A549 (cell line): ENCODE measurements at regions of chr16 and their contacts with region 1.

Region 1: DNA sequence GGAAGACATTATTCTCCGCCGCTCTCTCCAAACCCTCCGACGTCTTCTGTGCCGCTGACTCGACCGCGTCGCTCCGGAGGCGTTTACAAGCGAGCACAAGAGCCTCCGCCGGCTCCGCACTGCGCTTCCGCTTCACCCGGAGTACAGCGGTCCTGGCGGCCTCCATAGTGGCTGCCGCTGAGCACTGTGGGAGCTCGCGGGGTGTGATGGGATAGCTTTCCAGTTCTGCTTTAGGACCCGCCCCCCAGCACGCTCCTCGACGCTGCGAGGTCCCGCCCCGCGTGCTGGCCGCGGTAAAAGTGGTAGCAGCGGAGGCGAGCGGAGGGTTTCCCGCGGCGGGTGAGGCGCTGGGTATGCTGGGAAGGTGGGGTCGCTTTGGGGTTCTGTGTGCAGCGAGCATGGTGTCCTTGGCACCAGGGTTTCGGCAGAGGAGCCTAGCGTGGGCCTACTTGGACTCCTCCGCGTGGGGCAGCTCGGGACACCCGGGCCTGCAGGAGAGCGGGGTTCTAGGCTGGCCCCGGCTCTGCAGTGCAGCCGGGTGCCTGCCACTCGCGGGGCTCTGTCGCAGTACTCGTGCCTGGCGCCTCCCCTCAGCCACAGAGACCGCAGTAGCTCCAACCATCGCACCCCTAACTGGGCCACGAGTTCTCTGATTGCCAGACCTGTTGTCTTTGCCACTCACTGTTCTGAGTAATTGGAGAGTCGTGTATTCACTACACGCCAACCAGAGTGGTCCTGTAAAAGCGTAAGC is at the starts of genes PRMT7 and SLC7A6OS:
- DNase-seq: peak; percentile 89 to 98
- ATAC-seq: peak; percentile 99 to 100
- H3K4me3 ChIP-seq: peak within 1 kb of the TSS; percentile 91
- H3K27ac ChIP-seq: peak within 1 kb of the TSS; percentile 83 to 90
- H3K4me1 ChIP-seq: peaks cover 21% of the 10 kb centered on the region
- CTCF ChIP-seq: no peak
- EP300 ChIP-seq: no peak
- POLR2A ChIP-seq: peak; percentile 91
- RAD21 ChIP-seq: no peak
- polyA plus RNA-seq, gene PRMT7: 37.1 and 37.6 TPM in 2 replicates
- polyA plus RNA-seq, gene SLC7A6OS: 11.0 and 11.9 TPM in 2 replicates

Region 2: DNA sequence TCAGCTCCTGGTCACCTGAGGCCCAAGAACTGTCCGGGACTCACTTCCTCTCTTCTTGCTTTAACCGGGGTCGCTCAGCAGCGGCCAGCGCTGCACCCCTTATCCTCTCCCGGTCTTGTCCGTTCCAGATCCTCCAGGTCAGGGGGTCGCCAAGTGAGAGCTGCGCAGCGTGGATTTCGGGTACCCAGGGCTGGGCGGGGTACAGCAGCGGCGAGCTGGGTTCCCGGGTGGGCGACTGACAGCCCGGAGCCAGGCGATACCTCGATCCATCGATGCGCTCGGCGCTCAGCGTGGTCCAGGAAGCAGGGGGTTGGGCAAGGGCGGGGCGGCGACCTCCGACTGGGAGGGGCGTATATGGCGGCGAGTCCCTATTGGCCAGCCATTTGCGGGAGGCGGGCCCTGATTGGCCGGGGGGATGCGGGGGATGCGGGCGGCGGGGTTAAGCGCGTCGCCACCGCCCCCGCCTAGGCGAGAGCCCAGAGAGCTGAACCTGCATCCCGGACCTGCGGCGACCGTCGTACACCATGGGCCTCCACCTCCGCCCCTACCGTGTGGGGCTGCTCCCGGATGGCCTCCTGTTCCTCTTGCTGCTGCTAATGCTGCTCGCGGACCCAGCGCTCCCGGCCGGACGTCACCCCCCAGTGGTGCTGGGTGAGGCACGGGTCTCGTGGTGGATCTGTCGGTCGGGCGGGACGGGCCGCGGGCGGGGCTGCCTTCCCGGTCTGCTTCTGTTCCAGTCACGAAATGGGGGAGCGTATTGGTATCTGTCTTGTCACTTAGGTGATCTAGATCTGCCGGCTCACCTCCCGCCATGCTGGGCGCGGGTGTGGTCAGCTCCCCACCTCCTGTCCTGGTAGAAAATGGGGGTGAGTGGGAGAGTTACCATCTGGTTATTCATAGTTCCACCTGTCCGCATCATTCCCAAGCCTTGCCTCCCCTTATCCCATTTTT is 65.8 kb before region 1 on chr16 and contains the start of gene PLA2G15:
- CTCF ChIA-PET with region 1: interaction called, 10 read pairs
- POLR2A ChIA-PET with region 1: interaction called, 4 read pairs
- DNase-seq: peak; percentile 89 to 95
- ATAC-seq: peak; percentile 92 to 96
- H3K4me3 ChIP-seq: peak within 1 kb of the TSS; percentile 75
- H3K27ac ChIP-seq: peak within 1 kb of the TSS; percentile 69 to 87
- H3K4me1 ChIP-seq: peaks cover 12% of the 10 kb centered on the region; the same call in 2 of the 3 replicates
- CTCF ChIP-seq: no peak
- EP300 ChIP-seq: no peak
- POLR2A ChIP-seq: peak; percentile 55
- RAD21 ChIP-seq: no peak
- polyA plus RNA-seq, gene PLA2G15: 4.8 and 5.7 TPM in 2 replicates

Region 3: DNA sequence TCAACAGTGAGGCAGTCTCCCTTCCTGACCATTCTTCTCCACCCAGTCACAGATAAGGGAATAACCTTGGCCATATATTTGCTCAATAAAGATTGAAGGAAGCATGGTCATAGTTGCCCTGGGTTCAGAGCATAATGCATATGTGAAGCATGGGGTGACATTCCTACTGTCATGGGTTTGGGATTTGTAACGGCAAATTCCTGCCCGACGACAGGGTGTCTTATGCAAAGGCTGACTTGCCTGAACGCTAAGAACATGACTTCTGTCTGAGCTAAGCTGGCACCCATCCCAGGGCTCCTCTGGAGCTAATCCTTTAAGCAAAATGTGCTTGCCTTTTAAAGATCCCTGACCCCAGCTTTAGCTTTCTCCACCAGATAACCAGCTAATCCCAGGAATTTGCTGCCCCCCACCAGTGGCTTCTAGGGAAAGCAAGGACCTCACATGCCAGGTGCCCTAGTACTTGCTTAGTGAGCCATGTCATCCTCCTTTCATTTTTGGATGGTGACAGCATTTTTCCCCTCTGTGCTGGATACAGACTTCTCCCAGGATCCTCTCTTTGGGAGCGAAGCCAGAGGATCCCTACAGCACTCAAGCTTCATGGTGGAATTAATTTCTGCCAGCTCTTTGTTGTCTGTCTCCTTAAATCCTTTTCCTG is 11.9 kb before region 1 on chr16:
- CTCF ChIA-PET with region 1: interaction called, 10 read pairs
- POLR2A ChIA-PET with region 1: interaction called, 25 read pairs
- DNase-seq: no peak
- ATAC-seq: peak in 1 of 2 experiments; percentile 13; a peak in 2 of 6 replicates
- H3K4me3 ChIP-seq: no peak overlapping the region
- H3K27ac ChIP-seq: no peak overlapping the region
- H3K4me1 ChIP-seq: peaks cover 13% of the 10 kb centered on the region; the same call in 2 of the 3 replicates
- CTCF ChIP-seq: no peak
- EP300 ChIP-seq: no peak
- POLR2A ChIP-seq: no peak
- RAD21 ChIP-seq: no peak

Region 4: GRCh38 chr16:68564367-68564985 is 253.5 kb after region 1 on chr16:
- CTCF ChIA-PET with region 1: no interaction called
- POLR2A ChIA-PET with region 1: no interaction called
- DNase-seq: peak in 1 of 2 experiments; percentile 35
- ATAC-seq: no peak
- H3K4me3 ChIP-seq: no peak overlapping the region
- H3K27ac ChIP-seq: no peak overlapping the region
- H3K4me1 ChIP-seq: no peaks in the 10 kb centered on the region
- CTCF ChIP-seq: no peak
- EP300 ChIP-seq: no peak
- POLR2A ChIP-seq: no peak
- RAD21 ChIP-seq: no peak